ENCODE measurements at regions of chr7 and their contacts with region 1.

Region 1: DNA sequence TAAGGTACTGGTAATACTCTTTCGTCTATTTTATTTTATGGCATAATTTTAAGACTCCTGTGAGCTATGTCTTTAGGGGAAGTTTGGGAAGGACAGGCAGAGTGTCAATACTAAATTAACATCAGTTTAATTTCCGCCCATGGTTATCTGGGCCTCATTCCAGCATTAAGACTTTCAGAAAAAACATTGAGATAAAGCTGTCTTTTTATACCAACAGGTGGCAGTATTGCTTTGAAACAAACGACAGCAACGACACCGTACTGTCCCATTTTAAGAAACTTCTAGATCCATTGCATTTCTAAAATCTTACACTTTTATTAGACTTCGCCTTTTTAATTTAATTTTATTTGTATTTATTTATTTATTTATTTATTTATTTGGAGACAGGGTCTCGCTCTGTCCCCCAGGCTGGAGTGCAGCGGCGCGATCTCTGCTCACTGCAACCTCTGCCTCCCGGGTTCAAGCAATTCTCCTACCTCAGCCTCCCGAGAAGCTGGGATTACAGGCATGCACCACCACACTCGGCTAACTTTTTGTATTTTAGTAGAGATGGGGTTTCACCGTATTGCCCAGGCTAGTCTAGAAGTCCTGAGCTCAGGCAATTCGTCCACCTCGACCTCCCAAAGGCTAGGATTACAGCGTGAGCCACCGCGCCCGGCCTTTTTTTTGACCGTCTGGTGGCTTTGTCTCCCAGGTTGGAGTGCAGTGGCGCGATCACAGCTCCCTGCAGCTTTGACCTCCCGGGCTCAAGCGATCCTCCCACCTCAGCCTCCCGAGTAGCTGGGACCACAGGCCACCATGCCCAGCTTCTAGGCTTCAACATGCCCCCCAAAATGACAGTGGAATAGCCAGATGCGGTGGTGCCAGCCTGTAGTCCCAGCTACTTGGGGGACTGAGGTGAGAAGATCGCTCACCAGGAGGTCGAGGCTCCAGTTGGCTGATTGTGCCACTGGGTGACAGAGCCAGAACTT is 78.7 kb upstream of the C1GALT1 start:
- DNase-seq: peak; percentile 42 to 82 (median 49)
- ATAC-seq: peak; percentile 47
- H3K4me3 ChIP-seq: peak overlapping the region; percentile 32
- H3K27ac ChIP-seq: peak overlapping the region; percentile 72
- H3K4me1 ChIP-seq: peaks cover 22 to 43% of the 10 kb centered on the region in 2 experiments; a peak in 4 of 5 replicates
- H3K27me3 ChIP-seq: no peaks in the 10 kb centered on the region
- CTCF ChIP-seq: peak; percentile 41 to 76 (median 63); a peak in 5 of 6 replicates
- EP300 ChIP-seq: no peak
- POLR2A ChIP-seq: no peak
- RAD21 ChIP-seq: peak; percentile 78 to 87

Region 2: GRCh38 chr7:5620459-5620881 is 1483.2 kb before region 1 on chr7:
- CTCF ChIA-PET with region 1: no interaction called
- POLR2A ChIA-PET with region 1: no interaction called
- in situ Hi-C with region 1: no loop called
- intact Hi-C with region 1: no loop called
- DNase-seq: no peak
- ATAC-seq: peak; percentile 36
- H3K4me3 ChIP-seq: no peak overlapping the region
- H3K27ac ChIP-seq: no peak overlapping the region
- H3K4me1 ChIP-seq: peaks cover 0 to 10% of the 10 kb centered on the region in 2 experiments; a peak in 3 of 5 replicates
- H3K27me3 ChIP-seq: no peaks in the 10 kb centered on the region
- CTCF ChIP-seq: no peak
- EP300 ChIP-seq: no peak
- POLR2A ChIP-seq: no peak
- RAD21 ChIP-seq: no peak

Region 3: GRCh38 chr7:6032167-6032566 is 1071.5 kb before region 1 on chr7:
- CTCF ChIA-PET with region 1: no interaction called
- POLR2A ChIA-PET with region 1: no interaction called
- in situ Hi-C with region 1: no loop called
- intact Hi-C with region 1: no loop called
- DNase-seq: peak in 2 of 4 experiments; percentile 25 to 56
- ATAC-seq: peak; percentile 70
- H3K4me3 ChIP-seq: no peak overlapping the region
- H3K27ac ChIP-seq: peak overlapping the region; percentile 9; the same call in 1 of the 3 replicates
- H3K4me1 ChIP-seq: peaks cover 3 to 5% of the 10 kb centered on the region in 2 experiments; a peak in 4 of 5 replicates
- H3K27me3 ChIP-seq: no peaks in the 10 kb centered on the region
- CTCF ChIP-seq: no peak
- EP300 ChIP-seq: no peak; the same call in 1 of the 2 replicates
- POLR2A ChIP-seq: no peak
- RAD21 ChIP-seq: no peak

Region 4: DNA sequence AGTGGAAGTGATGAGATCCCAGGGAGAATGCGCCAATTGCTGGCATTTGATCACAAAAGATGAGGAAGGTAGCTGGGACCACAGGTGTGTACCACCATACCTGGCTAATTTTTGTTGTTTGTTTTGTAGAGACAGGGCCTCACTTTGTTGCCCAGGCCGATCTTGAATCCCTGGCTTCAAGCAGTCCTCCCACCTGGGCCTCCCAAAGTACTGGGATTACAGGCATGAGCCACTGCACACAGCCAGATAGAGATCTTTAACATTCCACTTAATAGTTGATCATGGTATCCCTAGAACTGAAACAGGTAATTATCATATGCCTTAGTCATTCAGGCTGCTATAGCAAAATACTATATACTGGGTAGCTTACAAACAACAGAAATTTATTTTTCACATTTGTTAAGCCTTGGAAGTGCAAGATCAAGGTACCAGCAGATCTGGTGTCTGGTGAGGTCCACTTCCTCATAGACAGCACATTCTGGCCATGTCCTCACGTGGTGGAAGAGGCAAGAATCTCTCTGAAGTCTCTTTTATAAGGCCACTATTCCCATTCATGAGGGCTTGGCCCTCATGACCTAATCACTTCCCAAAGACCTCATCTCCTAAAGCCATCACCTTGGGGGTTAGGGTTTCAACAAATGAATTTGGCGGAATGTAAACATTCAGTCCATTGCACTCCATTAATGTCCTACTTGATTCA is 59.0 kb before region 1 on chr7:
- CTCF ChIA-PET with region 1: no interaction called
- POLR2A ChIA-PET with region 1: interaction called, 5 read pairs
- in situ Hi-C with region 1: loop called (anchors 5 kb)
- intact Hi-C with region 1: loop called (anchors 1 kb)
- DNase-seq: no peak
- ATAC-seq: no peak
- H3K4me3 ChIP-seq: no peak overlapping the region
- H3K27ac ChIP-seq: no peak overlapping the region
- H3K4me1 ChIP-seq: peaks cover 6 to 21% of the 10 kb centered on the region in 2 experiments; a peak in 3 of 5 replicates
- H3K27me3 ChIP-seq: no peaks in the 10 kb centered on the region
- CTCF ChIP-seq: no peak
- EP300 ChIP-seq: no peak
- POLR2A ChIP-seq: no peak
- RAD21 ChIP-seq: no peak

Region 5: GRCh38 chr7:7182156-7183060 is 78.8 kb after region 1 on chr7 and contains the start of gene C1GALT1:
- CTCF ChIA-PET with region 1: no interaction called
- POLR2A ChIA-PET with region 1: interaction called, 7 read pairs
- in situ Hi-C with region 1: no loop called
- intact Hi-C with region 1: loop called (anchors 1 kb)
- DNase-seq: peak; percentile 96 to 98 (median 96)
- ATAC-seq: peak; percentile 92
- H3K4me3 ChIP-seq: peak within 1 kb of the TSS; percentile 87
- H3K27ac ChIP-seq: peak within 1 kb of the TSS; percentile 95
- H3K4me1 ChIP-seq: peaks cover 7 to 11% of the 10 kb centered on the region in 2 experiments; a peak in 3 of 5 replicates
- H3K27me3 ChIP-seq: no peaks in the 10 kb centered on the region
- CTCF ChIP-seq: peak; percentile 32 to 64 (median 43)
- EP300 ChIP-seq: no peak
- POLR2A ChIP-seq: peak; percentile 94
- RAD21 ChIP-seq: peak; percentile 29 to 41; a peak in 3 of 4 replicates
- polyA plus RNA-seq, gene C1GALT1: 5.0 to 6.4 TPM

Region 6: GRCh38 chr7:7352845-7353244 is 249.2 kb after region 1 on chr7:
- CTCF ChIA-PET with region 1: no interaction called
- POLR2A ChIA-PET with region 1: no interaction called
- in situ Hi-C with region 1: no loop called
- intact Hi-C with region 1: loop called (anchors 5 kb)
- DNase-seq: peak in 1 of 4 experiments; percentile 4
- ATAC-seq: no peak
- H3K4me3 ChIP-seq: no peak overlapping the region
- H3K27ac ChIP-seq: no peak overlapping the region
- H3K4me1 ChIP-seq: no peaks in the 10 kb centered on the region
- H3K27me3 ChIP-seq: peaks cover 0 to 2% of the 10 kb centered on the region in 2 experiments; a peak in 3 of 5 replicates
- CTCF ChIP-seq: peak in 1 of 3 experiments; percentile 40; a peak in 2 of 6 replicates
- EP300 ChIP-seq: no peak
- POLR2A ChIP-seq: no peak
- RAD21 ChIP-seq: peak in 1 of 2 experiments; percentile 57; a peak in 2 of 4 replicates

Region 7: DNA sequence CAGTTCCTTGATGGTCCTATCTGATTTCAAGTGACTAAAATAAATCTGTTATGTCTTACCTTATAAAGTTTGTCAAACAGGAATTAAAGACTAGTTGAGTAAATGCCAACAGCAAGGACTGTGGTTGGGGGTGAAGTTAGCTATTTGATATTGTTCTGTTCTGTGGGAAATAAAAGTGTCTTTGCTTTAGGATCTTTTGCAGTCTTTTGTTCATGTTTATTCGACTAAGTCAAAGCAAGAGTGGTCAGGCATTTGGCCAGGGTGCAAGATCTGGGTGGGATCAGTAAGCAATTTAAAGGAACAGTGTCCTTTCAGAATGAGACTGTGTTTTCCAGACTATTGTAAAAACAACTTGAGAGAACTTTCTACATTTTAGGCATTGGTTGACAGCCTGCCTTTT is 432.1 kb after region 1 on chr7 and contains the start of gene COL28A1:
- CTCF ChIA-PET with region 1: no interaction called
- POLR2A ChIA-PET with region 1: no interaction called
- in situ Hi-C with region 1: loop called (anchors 5 kb)
- intact Hi-C with region 1: loop called (anchors 5 kb)
- DNase-seq: no peak
- ATAC-seq: no peak
- H3K4me3 ChIP-seq: no peak within 1 kb of the TSS
- H3K27ac ChIP-seq: no peak within 1 kb of the TSS
- H3K4me1 ChIP-seq: no peaks in the 10 kb centered on the region
- H3K27me3 ChIP-seq: 0 out of 5 replicates have a peak, but pooled peaks cover 0 to 2% of the 10 kb centered on the region in 2 experiments
- CTCF ChIP-seq: no peak
- EP300 ChIP-seq: no peak
- POLR2A ChIP-seq: no peak
- RAD21 ChIP-seq: no peak
- polyA plus RNA-seq, gene COL28A1: 0.03 TPM in 1 of 2 experiments, not detected in the other